T-cell (primary cell): ENCODE measurements at regions of chr15 and their contacts with region 1.

Region 1: DNA sequence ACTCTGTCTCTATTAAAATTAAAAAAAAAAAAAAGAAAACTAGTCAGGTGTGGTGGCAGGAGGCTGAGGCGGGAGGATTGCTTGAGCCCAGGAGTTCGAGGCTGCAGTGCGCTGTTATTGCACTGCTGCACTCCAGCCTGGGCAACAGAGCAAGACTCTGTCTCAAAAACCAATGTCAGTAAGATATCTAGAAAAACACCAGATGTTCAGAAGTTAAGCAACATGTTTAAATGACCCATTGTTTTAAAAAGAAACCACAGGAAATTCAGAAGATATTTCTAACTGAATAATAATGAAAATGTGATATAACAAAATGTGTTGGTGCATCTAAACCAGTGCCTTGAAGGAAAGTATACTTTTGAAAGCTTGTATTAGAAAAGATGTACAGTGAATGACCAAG is 203.4 kb upstream of the CGNL1 start:
- DNase-seq: no peak
- ATAC-seq: no peak
- H3K4me3 ChIP-seq: no peak overlapping the region
- H3K4me3 Mint-ChIP-seq: no peak overlapping the region
- H3K27ac ChIP-seq: no peak overlapping the region
- H3K27ac Mint-ChIP-seq: peak overlapping the region in 1 of 2 donors; percentile 26
- H3K4me1 ChIP-seq: no peaks in the 10 kb centered on the region
- H3K4me1 Mint-ChIP-seq: peaks cover 0 to 7% (median 4%) of the 10 kb centered on the region in 3 donors
- H3K27me3 ChIP-seq: no peaks in the 10 kb centered on the region
- H3K27me3 Mint-ChIP-seq: no peaks in the 10 kb centered on the region

Region 2: DNA sequence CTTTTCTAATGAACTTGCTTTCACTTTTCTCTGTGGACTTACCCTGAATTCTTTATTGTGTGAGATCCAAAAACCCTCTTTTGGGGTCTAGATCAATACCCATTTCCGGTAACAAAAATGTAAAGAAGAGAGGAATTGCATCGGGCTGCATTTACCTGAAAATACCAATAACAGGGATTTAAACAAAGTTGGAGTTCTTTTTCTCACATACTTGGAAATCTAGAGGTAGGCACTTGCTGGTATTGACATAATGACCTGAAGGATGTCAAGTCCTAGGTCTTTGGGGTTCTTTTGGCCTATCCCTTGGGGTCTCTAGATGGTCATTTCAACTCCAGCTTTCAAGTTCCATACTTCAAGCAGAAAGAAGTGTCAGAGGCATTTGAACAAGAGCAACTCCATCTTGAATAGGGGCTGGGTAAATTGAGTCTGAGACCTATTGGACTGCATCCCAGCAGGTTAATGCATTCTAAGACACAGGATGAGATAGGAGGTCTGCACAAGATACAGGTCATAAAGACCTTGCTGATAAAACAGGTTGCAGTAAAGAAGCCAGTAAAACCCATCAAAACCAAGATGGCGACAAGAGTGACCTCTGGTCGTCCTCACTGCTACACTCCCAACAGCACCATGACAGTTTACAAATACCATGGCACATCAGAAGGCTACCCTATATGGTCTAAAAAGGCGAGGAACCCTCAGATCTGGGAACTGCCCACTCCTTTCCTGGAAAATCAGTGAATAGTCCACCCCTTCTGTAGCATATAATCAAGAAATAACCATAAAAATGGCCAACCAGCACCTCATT is 388.9 kb before region 1 on chr15:
- CTCF ChIA-PET with region 1: no interaction called
- POLR2A ChIA-PET with region 1: interaction called in 1 of 2 experiments, 16 read pairs
- DNase-seq: no peak
- ATAC-seq: no peak
- H3K4me3 ChIP-seq: no peak overlapping the region
- H3K4me3 Mint-ChIP-seq: no peak overlapping the region
- H3K27ac ChIP-seq: no peak overlapping the region
- H3K27ac Mint-ChIP-seq: no peak overlapping the region
- H3K4me1 ChIP-seq: peaks cover 0 to 4% of the 10 kb centered on the region in 2 experiments
- H3K4me1 Mint-ChIP-seq: peaks cover 6 to 17% (median 12%) of the 10 kb centered on the region in 3 donors
- H3K27me3 ChIP-seq: peaks cover 0 to 6% of the 10 kb centered on the region in 2 experiments
- H3K27me3 Mint-ChIP-seq: peaks cover 0 to 4% of the 10 kb centered on the region in 2 donors

Region 3: DNA sequence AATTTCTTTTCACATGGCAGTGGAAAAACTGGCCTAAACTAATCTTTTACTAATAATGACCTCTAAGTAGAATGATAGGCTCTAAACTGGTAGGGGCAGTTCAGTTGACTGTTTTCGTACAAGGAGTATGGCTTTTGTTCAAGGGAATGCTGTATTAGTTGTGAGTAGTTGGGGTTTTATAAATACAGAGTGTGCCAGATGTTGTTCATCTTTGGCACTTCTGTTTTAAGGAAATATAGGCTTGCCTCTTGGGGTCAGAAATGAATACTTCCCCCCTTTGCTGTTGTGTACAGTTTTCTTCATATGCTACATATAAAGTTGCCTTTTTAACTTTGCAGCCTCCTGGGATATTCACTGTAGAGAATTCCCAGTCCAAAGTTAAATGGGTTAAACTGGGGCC is 22.4 kb after region 1 on chr15:
- CTCF ChIA-PET with region 1: no interaction called
- POLR2A ChIA-PET with region 1: no interaction called
- DNase-seq: no peak
- ATAC-seq: no peak
- H3K4me3 ChIP-seq: no peak overlapping the region
- H3K4me3 Mint-ChIP-seq: no peak overlapping the region
- H3K27ac ChIP-seq: no peak overlapping the region
- H3K27ac Mint-ChIP-seq: no peak overlapping the region
- H3K4me1 ChIP-seq: no peaks in the 10 kb centered on the region
- H3K4me1 Mint-ChIP-seq: peaks cover 0 to 3% (median 3%) of the 10 kb centered on the region in 3 donors
- H3K27me3 ChIP-seq: no peaks in the 10 kb centered on the region
- H3K27me3 Mint-ChIP-seq: no peaks in the 10 kb centered on the region

Region 4: DNA sequence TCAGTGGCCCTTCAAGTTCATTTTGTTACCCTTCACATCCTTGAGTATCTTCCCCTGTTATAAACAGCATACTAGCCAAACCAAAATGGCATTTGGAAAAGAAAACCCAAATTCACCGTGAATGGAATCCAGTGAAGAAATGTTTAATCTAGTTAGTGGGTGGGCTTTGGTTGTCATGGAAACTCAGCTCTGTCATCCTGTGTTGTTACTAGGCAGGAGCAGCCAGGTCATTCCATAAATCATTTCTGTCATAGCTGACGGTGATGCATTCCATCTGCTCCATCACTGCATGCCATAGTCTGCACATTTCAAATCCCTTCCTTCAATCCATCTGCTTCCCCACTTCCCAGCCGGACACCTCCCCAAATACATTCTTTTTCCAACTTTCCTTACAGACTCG is 62.9 kb after region 1 on chr15:
- CTCF ChIA-PET with region 1: no interaction called
- POLR2A ChIA-PET with region 1: no interaction called
- DNase-seq: no peak
- ATAC-seq: no peak
- H3K4me3 ChIP-seq: no peak overlapping the region
- H3K4me3 Mint-ChIP-seq: no peak overlapping the region
- H3K27ac ChIP-seq: no peak overlapping the region
- H3K27ac Mint-ChIP-seq: no peak overlapping the region
- H3K4me1 ChIP-seq: no peaks in the 10 kb centered on the region
- H3K4me1 Mint-ChIP-seq: peaks cover 0 to 6% (median 0%) of the 10 kb centered on the region in 3 donors
- H3K27me3 ChIP-seq: no peaks in the 10 kb centered on the region
- H3K27me3 Mint-ChIP-seq: no peaks in the 10 kb centered on the region

Region 5: DNA sequence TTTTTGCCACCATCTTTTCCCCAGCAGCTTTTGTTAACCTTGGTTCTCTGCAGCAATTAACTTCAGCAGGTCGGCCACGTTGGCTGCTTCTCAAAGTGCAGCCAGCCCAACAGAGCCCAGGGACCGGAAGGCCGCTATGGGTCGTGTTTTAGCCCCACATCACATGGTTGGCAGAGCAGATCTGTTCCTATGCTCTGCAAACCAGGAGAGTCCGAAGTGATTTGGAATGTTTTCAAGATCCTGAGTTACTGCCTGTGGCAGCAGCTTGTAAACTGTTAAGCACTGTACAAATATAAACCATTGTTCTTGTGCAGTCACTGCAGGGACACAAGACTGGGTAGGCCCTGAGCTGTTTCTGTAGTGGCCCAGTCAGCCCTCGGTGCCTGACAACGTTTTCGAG is 349.2 kb after region 1 on chr15:
- CTCF ChIA-PET with region 1: no interaction called
- POLR2A ChIA-PET with region 1: no interaction called
- DNase-seq: no peak
- ATAC-seq: no peak
- H3K4me3 ChIP-seq: no peak overlapping the region
- H3K4me3 Mint-ChIP-seq: no peak overlapping the region
- H3K27ac ChIP-seq: no peak overlapping the region
- H3K27ac Mint-ChIP-seq: no peak overlapping the region
- H3K4me1 ChIP-seq: no peaks in the 10 kb centered on the region
- H3K4me1 Mint-ChIP-seq: no peaks in the 10 kb centered on the region
- H3K27me3 ChIP-seq: peaks cover 0 to 7% of the 10 kb centered on the region in 2 experiments
- H3K27me3 Mint-ChIP-seq: peaks cover 7 to 8% of the 10 kb centered on the region in 2 donors